Activated CD4-positive, alpha-beta memory T cell treated with anti-CD3 and anti-CD28 coated beads for 36 hours (primary cell): ENCODE measurements at regions of chr5 and their contacts with region 1.

Region 1: DNA sequence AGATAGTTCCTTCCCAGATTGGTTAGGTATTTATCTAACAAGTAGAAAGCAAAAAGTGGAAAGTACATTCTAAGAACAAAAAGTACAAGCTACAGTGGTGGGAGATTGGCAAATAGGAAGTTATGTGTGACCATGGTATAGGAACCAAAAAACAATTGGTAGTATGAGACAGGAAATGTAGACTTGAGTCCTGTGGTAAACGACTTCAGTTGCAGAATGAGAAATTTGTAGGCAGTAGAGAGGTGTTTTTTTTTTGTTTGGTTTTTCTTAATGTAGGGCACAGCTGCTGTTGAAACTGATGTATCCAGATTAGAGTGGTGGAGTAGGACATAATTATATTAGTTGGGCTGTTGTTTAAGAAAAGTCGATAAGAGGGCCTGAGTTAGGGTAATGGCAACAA is 72.0 kb downstream of the CCNH start:
- DNase-seq: no peak
- H3K4me3 Mint-ChIP-seq: peak overlapping the region; percentile 47
- H3K27ac Mint-ChIP-seq: peak overlapping the region; percentile 73
- H3K4me1 Mint-ChIP-seq: peaks cover 17% of the 10 kb centered on the region
- H3K27me3 Mint-ChIP-seq: no peaks in the 10 kb centered on the region

Region 2: DNA sequence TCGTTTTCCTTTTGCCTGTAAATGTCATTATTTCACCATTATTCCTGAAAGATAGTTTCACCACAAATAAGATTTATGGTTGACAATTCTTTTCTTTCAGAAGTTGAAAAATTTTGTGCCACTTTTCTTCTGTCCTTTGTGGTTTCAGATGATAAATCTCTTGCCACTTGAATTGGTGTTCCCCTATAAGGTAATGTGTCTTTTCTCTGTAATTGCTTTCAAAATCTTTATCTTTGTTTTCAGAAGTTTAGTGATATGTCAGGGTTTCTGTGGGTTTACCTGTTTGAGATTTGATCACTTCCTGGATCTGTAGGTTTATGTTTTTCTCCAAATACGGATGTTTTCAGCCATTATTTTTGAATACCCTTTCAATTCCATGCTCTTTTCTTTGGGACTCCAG is 58.4 kb before region 1 on chr5:
- CTCF ChIA-PET with region 1: no interaction called
- POLR2A ChIA-PET with region 1: no interaction called
- intact Hi-C with region 1: loop called (anchors 1 kb)
- DNase-seq: no peak
- H3K4me3 Mint-ChIP-seq: peak overlapping the region; percentile 70
- H3K27ac Mint-ChIP-seq: peak overlapping the region; percentile 89
- H3K4me1 Mint-ChIP-seq: peaks cover 48% of the 10 kb centered on the region
- H3K27me3 Mint-ChIP-seq: no peaks in the 10 kb centered on the region

Region 3: GRCh38 chr5:87300744-87301143 is 40.0 kb before region 1 on chr5:
- CTCF ChIA-PET with region 1: no interaction called
- POLR2A ChIA-PET with region 1: no interaction called
- intact Hi-C with region 1: loop called (anchors 2 kb)
- DNase-seq: peak; percentile 70
- H3K4me3 Mint-ChIP-seq: no peak overlapping the region
- H3K27ac Mint-ChIP-seq: no peak overlapping the region
- H3K4me1 Mint-ChIP-seq: peaks cover 65% of the 10 kb centered on the region
- H3K27me3 Mint-ChIP-seq: no peaks in the 10 kb centered on the region

Region 4: DNA sequence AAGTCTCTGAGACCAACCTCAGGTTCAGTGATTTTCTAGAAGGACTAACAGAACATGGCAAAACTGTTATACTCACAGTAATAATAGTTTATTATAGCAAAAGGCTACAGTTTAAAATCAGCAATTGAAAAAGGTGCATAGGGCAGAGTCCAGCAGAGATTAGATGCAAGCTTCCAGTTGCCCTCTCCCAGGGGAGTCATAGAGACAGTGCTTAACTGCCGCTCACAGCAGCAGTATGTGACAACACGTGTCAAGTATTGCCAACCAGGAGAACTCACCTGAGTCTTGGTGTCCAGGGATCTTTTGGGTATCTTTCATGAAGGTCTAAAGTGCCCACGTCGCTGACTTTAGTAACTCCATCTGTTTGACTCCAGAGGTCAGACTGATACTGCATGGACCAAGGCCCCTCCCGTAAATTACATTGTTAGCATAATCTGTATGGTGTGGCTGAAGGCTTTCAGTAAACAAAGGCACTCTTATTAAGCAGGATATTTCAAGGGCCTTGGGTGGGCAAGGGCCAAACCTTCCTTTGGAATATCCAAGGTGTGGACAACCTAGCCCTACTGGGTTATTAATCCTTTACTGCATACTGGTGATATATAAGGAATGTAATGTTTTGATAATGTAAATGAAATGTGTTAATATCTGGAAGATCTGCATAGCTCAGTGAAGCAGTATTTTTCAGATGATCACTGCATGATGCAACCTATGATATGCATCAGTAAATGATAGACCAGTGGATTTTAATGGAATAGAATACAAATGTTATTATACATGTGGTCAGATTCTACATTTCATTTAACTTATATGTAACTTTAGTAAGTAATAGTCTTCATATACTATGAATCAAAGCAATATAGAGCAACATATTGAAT is 29.1 kb before region 1 on chr5:
- CTCF ChIA-PET with region 1: no interaction called
- POLR2A ChIA-PET with region 1: no interaction called
- intact Hi-C with region 1: no loop called
- DNase-seq: no peak
- H3K4me3 Mint-ChIP-seq: no peak overlapping the region
- H3K27ac Mint-ChIP-seq: no peak overlapping the region
- H3K4me1 Mint-ChIP-seq: peaks cover 45% of the 10 kb centered on the region
- H3K27me3 Mint-ChIP-seq: no peaks in the 10 kb centered on the region

Region 5: GRCh38 chr5:87499478-87500410 is 159.0 kb after region 1 on chr5:
- CTCF ChIA-PET with region 1: no interaction called
- POLR2A ChIA-PET with region 1: no interaction called
- intact Hi-C with region 1: no loop called
- DNase-seq: no peak
- H3K4me3 Mint-ChIP-seq: no peak overlapping the region
- H3K27ac Mint-ChIP-seq: no peak overlapping the region
- H3K4me1 Mint-ChIP-seq: no peaks in the 10 kb centered on the region
- H3K27me3 Mint-ChIP-seq: peaks cover 5% of the 10 kb centered on the region